ENCODE measurements at regions of chr12 and their contacts with region 1.

Region 1: DNA sequence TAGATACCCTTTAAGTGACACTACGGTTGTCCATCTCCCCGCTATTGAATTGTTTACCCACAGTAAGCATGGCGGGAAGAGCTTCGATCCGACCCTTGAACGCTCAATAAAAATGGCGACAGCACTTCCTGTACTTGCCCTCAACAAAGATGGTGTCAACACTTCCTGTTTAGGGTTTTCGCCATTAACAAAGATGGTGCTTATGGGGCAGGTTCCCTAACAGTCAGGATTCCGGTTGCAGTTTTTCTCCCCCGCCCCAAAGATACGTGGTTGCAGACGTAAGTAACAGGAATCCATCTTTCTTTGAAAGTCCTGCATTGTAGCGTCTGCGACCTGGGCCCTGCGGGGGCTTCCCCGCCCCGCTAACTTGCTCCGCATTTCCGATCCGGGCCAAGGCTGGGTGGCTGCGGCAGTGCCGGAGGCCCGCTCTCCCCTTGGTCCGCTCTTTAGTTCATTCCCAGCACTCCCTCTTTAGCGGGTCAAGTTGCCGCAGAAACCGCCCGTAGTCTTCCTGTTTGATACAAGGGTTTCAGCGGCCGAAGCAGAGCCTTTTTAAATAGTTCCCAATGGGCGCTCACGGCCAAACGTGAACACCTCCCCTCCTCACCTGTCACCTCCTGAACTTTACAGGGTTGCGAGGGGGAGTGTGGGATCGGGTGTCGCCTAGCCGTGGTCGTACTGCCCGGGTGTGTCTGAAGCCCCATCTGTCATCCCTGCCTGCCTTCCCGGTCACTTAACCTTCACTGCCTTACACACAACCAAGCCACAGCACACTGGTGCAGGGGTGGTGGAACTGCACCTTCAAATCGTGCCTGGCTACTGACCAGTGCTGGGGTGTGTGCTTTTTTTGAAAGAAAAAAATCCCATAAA is at the start of gene CRADD:
- DNase-seq: peak; percentile 56 to 94 (median 84)

Region 2: DNA sequence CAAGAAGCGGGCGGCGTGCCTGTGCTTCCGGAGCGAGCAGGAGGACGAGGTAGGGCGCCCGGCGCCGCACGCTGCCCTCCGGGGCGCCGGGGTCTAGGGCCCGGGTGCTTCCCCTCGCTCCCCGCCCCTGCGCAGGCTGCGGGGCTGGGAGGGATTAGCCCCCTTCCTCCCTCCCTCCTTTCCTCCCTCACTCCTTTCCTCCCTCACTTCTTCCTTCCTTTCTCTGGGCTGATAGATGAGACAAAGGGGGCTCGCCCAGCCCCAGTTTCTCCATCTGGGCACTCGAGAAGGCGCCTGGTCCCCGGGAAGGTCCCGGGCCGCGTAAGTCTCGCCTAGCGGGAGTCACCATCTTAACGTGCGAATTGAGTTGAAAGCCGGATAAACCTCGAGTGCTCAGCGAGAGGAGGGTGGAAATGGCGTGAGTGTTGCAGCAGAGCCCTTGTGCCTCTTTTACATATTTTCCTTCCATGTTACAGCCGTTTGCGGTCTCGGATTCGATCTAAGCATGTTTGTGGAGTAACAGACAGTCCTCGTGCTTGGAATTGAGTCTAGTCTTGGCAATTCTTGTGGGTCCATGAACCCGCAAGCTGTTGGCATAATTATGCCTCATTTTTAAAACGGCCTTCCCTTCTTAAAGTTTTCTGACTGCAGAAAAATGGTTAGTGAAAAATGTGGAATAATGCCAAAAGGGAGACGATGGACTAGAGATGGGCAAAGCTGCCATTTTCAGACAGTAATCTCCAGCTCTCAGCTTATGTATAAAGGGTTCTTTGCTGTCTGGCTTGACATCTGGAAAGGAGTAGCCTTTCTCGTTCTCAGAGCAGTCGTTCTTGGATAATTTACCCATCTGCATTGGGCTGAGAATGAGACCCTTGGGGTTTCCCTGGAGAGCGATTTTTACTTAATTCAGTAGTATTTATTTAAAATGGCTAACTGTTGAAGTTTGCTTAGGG is 298.8 kb before region 1 on chr12:
- intact Hi-C with region 1: no loop called
- DNase-seq: peak in 40 of 42 donors; percentile 16 to 72 (median 40)

Region 3: GRCh38 chr12:93441617-93442410 is 235.6 kb before region 1 on chr12 and contains the start of gene UBE2N:
- intact Hi-C with region 1: loop called (anchors 10 kb)
- DNase-seq: peak; percentile 89 to 99 (median 98)

Region 4: GRCh38 chr12:93468008-93468371 is 209.4 kb before region 1 on chr12:
- intact Hi-C with region 1: no loop called
- DNase-seq: no peak

Region 5: DNA sequence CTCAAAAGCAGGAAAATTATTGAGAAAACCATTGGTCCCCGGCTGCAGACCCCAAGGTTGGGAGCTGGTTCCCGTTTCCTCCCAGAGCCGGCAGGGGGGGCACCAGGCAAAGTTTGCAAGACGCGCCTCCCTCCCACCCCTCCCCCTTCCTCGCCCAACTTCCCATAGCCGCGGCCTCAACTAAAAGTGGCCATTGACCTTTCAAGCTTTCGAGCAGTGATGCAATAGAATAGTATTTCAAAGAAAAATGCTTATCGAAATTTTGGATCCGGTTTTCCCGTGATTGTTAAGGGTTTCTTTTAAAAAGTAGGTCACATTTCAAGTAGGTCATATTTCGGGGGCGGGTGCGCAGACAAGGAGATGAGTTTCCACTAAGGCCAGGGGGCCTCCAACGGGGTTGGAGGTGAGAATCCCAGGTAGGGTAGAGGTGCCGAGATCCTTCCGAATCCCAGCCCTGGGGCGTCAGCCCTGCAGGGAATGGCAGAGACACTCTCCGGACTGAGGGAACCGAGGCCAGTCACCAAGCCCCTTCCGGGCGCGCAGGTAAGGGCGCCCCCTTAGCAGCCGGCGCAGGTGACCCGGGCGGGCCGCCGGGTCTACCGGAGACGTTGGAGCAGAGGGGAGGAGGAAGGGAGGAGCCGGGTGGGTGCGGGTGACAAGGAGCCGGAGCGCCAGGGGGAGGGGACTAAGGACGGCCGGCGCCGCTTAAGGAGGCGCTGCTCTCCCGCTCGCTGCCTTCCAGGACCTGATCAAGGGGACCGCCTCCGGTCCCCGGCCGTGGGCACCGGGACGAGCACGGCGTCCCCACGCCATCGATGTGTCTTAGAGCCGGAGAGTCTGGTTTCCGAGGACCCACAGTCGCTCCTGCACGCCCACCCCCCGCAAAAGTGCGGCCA is 107.5 kb before region 1 on chr12:
- intact Hi-C with region 1: loop called (anchors 5 kb)
- DNase-seq: peak; percentile 62 to 92 (median 82)

Region 6: DNA sequence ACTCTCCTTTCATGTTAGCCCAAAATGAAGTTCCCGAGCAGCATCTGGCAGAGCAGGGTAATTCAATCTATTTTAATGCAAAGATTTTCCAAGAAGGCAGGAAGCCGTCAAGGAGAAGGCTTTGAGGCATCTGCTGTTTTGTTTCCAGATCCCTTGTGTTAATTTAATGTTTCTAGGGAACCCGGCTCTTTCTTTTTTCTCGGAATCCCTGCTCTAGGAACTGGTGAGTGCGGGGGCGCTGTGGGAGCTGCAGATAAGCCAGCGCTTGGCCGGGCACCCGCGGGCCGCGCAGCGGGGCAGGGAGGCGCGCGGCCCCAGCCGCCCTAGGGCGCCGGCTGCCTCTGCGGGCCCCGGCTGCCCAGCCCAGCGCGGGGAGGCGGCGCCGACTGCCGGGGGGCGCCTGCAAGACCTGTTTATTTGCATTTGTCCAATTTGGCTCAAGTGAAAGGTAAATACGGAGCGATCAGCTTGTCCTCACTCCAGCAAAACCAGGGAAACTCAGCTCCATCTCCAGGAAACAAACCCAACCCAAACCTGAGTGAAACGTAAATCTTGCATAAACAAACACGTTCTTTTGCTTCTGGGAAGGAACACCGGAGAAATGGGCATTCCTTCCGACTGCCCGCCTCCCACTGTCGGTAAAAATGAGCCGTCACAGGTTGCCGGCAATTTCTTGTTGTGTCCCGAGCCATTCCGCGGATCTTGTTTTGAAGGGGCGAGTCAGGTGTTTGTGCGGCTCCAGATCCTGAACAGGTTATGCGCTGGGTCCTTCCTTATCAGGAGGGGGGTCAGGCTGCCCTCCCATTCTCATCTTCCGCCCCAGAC is 64.9 kb after region 1 on chr12:
- intact Hi-C with region 1: loop called (anchors 5 kb)
- DNase-seq: peak; percentile 55 to 91 (median 80)

Region 7: GRCh38 chr12:93813972-93814821 is 136.8 kb after region 1 on chr12:
- intact Hi-C with region 1: loop called (anchors 10 kb)
- DNase-seq: peak in 40 of 42 donors; percentile 9 to 84 (median 60)